Ovary (tissue), 10 donors: ENCODE measurements at regions of chr1 and their contacts with region 1.

Region 1: GRCh38 chr1:171485375-171486047 is at the start of gene PRRC2C:
- DNase-seq: peak; percentile 96 to 99 (median 98)
- H3K4me3 ChIP-seq: peak within 1 kb of the TSS; percentile 85
- H3K27ac ChIP-seq: peak within 1 kb of the TSS; percentile 98 to 99
- H3K4me1 ChIP-seq: no peaks in the 10 kb centered on the region
- H3K27me3 ChIP-seq: no peaks in the 10 kb centered on the region
- CTCF ChIP-seq: peak; percentile 11 to 92 (median 78)
- EP300 ChIP-seq: peak; percentile 18
- POLR2A ChIP-seq: peak; percentile 77
- total RNA-seq, gene PRRC2C: 51.6 to 136 (median 107) TPM

Region 2: GRCh38 chr1:170807432-170807831 is 678.1 kb before region 1 on chr1:
- intact Hi-C with region 1: no loop called
- DNase-seq: no peak
- H3K4me3 ChIP-seq: no peak overlapping the region
- H3K27ac ChIP-seq: no peak overlapping the region
- H3K4me1 ChIP-seq: no peaks in the 10 kb centered on the region
- H3K27me3 ChIP-seq: no peaks in the 10 kb centered on the region
- CTCF ChIP-seq: no peak
- EP300 ChIP-seq: no peak
- POLR2A ChIP-seq: no peak

Region 3: DNA sequence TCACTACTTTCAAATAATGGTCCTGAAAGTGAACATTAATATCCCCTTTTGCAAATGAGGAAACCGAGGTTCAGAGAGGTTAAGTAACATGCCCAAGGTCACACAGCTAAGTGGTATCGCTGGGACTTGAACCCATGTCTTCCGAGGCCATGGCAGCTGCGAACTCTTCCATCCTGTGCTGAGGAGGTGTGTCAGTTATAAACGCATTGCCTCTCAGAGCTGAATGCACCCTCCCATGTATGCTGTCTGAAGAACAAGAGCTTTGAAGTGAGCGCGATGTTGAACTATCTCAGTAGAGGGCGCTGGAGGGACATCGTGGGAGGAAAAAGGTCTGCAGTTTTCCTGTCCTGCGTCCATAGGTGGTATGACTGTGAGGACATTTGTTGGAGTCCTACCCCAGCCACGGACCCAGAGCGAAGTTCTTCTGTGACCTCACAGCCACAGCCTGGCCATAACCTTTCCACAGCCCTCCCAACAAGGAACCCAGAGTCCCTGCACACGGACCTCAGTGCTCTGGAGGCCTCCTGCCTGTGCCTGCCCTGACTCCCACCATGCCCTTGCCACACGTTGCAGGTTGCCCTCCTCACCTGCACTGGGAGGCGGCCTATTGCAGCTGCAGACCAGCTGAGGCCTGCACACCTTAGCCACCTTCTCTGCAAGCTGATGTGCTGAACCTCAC is 159.4 kb after region 1 on chr1:
- intact Hi-C with region 1: loop called in 1 of 4 experiments (anchors 10 kb)
- DNase-seq: peak; percentile 69 to 86 (median 76)
- H3K4me3 ChIP-seq: no peak overlapping the region
- H3K27ac ChIP-seq: peak overlapping the region; percentile 28 to 54
- H3K4me1 ChIP-seq: peaks cover 8% of the 10 kb centered on the region
- H3K27me3 ChIP-seq: no peaks in the 10 kb centered on the region
- CTCF ChIP-seq: peak; percentile 46 to 77 (median 57)
- EP300 ChIP-seq: no peak
- POLR2A ChIP-seq: no peak